Common myeloid progenitor, CD34-positive (primary cell): ENCODE measurements at regions of chr2 and their contacts with region 1.

Region 1: DNA sequence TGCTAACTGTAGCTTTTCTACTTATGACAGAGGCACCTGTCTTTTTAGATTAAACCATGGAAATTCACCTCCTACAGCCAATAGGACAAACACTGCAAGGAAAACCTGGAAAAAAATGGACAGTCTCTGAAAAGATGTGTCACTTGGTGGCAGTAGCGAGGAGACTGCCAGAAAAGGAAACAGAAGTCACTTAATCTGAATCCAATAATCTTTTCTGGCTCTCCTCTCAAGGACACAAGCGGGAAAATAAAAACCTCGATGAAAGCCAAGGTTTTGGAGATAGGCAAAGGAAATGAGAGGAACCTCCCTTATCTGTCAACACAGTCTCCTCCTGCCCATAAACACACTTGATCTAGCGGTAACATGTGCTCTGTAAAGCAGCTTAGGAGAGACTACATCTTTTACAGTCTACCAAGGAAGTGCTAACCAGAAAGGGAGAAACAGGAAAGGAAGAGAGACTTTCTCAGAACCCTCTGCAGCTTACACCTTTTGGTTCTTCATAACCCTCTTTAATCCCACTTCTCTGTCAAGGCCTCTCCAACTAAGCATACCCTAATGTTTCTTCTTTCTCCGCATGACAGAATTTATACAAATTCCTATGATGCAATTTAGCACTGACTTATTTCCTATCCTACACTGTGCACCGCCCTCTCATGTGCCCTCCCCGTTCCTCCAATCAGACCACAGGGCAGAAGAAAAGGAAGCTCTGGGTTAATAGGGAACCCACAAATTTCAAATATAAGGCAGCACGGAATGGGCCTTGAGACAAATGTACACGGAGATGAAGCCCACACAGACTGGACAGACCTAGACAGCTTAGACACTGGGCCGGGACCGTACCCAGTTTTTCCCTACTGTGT is 52.8 kb downstream of the CLASP1 start:
- DNase-seq: peak; percentile 71 to 89 (median 86)
- H3K4me3 ChIP-seq: peak overlapping the region in 6 of 7 experiments; percentile 42 to 77 (median 54)
- H3K27ac ChIP-seq: peak overlapping the region; percentile 62 to 82
- H3K4me1 ChIP-seq: peaks cover 14 to 34% (median 23%) of the 10 kb centered on the region in 4 experiments
- H3K27me3 ChIP-seq: no peaks in the 10 kb centered on the region

Region 2: GRCh38 chr2:121471532-121472469 is 124.7 kb before region 1 on chr2:
- CTCF ChIA-PET with region 1: no interaction called
- POLR2A ChIA-PET with region 1: no interaction called
- DNase-seq: no peak
- H3K4me3 ChIP-seq: no peak overlapping the region
- H3K27ac ChIP-seq: no peak overlapping the region
- H3K4me1 ChIP-seq: peaks cover 0 to 16% (median 3%) of the 10 kb centered on the region in 4 experiments
- H3K27me3 ChIP-seq: no peaks in the 10 kb centered on the region

Region 3: GRCh38 chr2:121613774-121614173 is 17.3 kb after region 1 on chr2:
- CTCF ChIA-PET with region 1: interaction called, 10 read pairs
- POLR2A ChIA-PET with region 1: no interaction called
- DNase-seq: no peak
- H3K4me3 ChIP-seq: no peak overlapping the region
- H3K27ac ChIP-seq: no peak overlapping the region
- H3K4me1 ChIP-seq: peaks cover 4 to 16% (median 8%) of the 10 kb centered on the region in 4 experiments
- H3K27me3 ChIP-seq: no peaks in the 10 kb centered on the region

Region 4: GRCh38 chr2:122031544-122032263 is 435.3 kb after region 1 on chr2:
- CTCF ChIA-PET with region 1: no interaction called
- POLR2A ChIA-PET with region 1: no interaction called
- DNase-seq: peak in 2 of 3 donors; percentile 41 to 49
- H3K4me3 ChIP-seq: no peak overlapping the region
- H3K27ac ChIP-seq: no peak overlapping the region
- H3K4me1 ChIP-seq: peaks cover 0 to 20% (median 8%) of the 10 kb centered on the region in 4 experiments
- H3K27me3 ChIP-seq: peaks cover 0 to 6% (median 0%) of the 10 kb centered on the region in 5 experiments